ENCODE measurements at regions of chr20 and their contacts with region 1.

Region 1: GRCh38 chr20:956330-956951 is 40.3 kb upstream of the ANGPT4 start:
- DNase-seq: peak; percentile 67 to 87 (median 81)
- H3K4me3 ChIP-seq: no peak overlapping the region
- H3K27ac ChIP-seq: no peak overlapping the region
- H3K4me1 ChIP-seq: peaks cover 0 to 7% (median 1%) of the 10 kb centered on the region in 4 experiments
- H3K27me3 ChIP-seq: peaks cover 0 to 14% (median 4%) of the 10 kb centered on the region in 5 experiments

Region 2: DNA sequence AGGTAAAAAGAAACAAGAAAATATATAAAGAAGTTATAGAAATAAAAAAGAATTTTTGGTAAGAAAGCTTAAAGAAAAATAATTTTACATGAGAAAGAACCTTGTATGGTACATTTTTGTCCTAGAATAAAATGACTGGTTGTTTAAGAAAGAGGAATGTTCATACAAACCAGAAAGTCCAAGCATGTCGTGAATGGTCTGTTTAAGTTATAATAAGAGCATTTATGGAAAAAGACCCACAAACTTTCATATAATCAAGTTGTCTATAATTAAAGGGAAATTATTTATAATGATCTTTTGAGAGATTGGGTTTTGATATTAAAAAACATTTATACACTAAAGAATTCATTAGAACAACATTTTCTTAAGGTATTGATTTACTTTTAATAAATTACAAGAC is 150.7 kb before region 1 on chr20:
- CTCF ChIA-PET with region 1: interaction called, 12 read pairs
- POLR2A ChIA-PET with region 1: no interaction called
- DNase-seq: peak in 2 of 3 donors; percentile 7 to 26
- H3K4me3 ChIP-seq: no peak overlapping the region
- H3K27ac ChIP-seq: no peak overlapping the region
- H3K4me1 ChIP-seq: no peaks in the 10 kb centered on the region
- H3K27me3 ChIP-seq: peaks cover 0 to 2% (median 0%) of the 10 kb centered on the region in 5 experiments

Region 3: GRCh38 chr20:884983-885952 is 71.2 kb before region 1 on chr20:
- CTCF ChIA-PET with region 1: interaction called, 24 read pairs
- POLR2A ChIA-PET with region 1: no interaction called
- DNase-seq: peak; percentile 72 to 87 (median 82)
- H3K4me3 ChIP-seq: peak overlapping the region in 1 of 7 experiments; percentile 33
- H3K27ac ChIP-seq: no peak overlapping the region
- H3K4me1 ChIP-seq: peaks cover 0 to 7% (median under 1%) of the 10 kb centered on the region in 4 experiments
- H3K27me3 ChIP-seq: peaks cover 0 to 8% (median 0%) of the 10 kb centered on the region in 5 experiments

Region 4: GRCh38 chr20:967796-968742 is 11.6 kb after region 1 on chr20:
- CTCF ChIA-PET with region 1: interaction called, 36 read pairs
- POLR2A ChIA-PET with region 1: no interaction called
- DNase-seq: peak; percentile 22 to 49 (median 45)
- H3K4me3 ChIP-seq: no peak overlapping the region
- H3K27ac ChIP-seq: no peak overlapping the region
- H3K4me1 ChIP-seq: no peaks in the 10 kb centered on the region
- H3K27me3 ChIP-seq: peaks cover 0 to 2% (median 0%) of the 10 kb centered on the region in 5 experiments

Region 5: DNA sequence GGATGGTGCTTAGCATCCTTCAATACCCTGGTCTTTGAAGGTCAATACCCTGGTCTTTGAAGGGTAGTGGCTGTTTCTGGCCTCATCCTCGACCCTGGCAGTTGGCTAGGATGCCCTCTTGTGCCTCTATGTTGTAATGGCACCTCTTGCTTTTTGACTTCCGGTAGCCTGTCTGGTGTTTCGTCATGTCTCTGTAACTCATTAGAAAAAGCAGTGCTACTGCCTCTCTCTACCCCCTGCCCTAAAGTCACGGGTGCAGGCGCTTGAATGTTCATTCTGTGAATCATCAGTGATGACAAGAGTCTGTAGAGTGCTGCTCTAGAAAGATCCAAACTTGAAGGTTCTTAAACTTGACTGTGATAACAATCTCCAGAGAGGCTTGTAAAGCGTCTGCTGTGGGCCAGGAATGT is 17.3 kb after region 1 on chr20:
- CTCF ChIA-PET with region 1: interaction called, 36 read pairs
- POLR2A ChIA-PET with region 1: no interaction called
- DNase-seq: peak; percentile 58 to 78 (median 75)
- H3K4me3 ChIP-seq: no peak overlapping the region
- H3K27ac ChIP-seq: no peak overlapping the region
- H3K4me1 ChIP-seq: no peaks in the 10 kb centered on the region
- H3K27me3 ChIP-seq: peaks cover 0 to 2% (median 0%) of the 10 kb centered on the region in 5 experiments

Region 6: GRCh38 chr20:1108437-1108920 is 152.0 kb after region 1 on chr20:
- CTCF ChIA-PET with region 1: interaction called, 12 read pairs
- POLR2A ChIA-PET with region 1: no interaction called
- DNase-seq: peak in 2 of 3 donors; percentile 43 to 55
- H3K4me3 ChIP-seq: no peak overlapping the region
- H3K27ac ChIP-seq: no peak overlapping the region
- H3K4me1 ChIP-seq: no peaks in the 10 kb centered on the region
- H3K27me3 ChIP-seq: no peaks in the 10 kb centered on the region

Region 7: DNA sequence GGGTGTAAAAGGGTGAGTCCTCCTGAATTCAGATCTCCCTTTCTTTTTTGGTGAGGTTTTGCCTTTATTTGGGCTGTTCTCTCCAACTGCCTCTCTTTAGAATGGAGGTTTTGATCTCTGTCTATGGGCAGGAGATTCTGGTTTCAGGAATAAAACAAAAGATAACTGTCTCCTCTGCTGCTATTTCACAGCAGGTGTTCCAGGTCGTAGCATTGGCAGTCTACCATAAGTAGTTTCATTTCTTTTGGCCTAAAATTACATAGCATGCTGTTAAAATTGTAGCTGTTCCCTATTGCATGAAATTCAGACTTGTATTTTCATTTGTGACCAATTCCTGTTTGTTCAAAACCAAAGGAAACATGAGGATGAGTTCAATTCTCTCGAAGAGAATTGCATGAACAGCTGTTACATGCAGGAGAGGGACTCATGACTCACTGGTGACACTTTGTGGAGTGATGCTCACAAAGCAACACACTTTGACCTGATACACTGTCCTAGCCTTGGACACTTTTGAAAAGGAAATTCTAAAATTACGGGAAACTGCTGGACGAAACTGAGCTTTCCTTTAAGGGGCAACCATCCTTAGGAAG is 777.9 kb after region 1 on chr20:
- CTCF ChIA-PET with region 1: no interaction called
- POLR2A ChIA-PET with region 1: no interaction called
- DNase-seq: peak in 2 of 3 donors; percentile 24 to 30
- H3K4me3 ChIP-seq: no peak overlapping the region
- H3K27ac ChIP-seq: no peak overlapping the region
- H3K4me1 ChIP-seq: peaks cover 0 to 2% (median 0%) of the 10 kb centered on the region in 4 experiments
- H3K27me3 ChIP-seq: peaks cover 0 to 6% (median 0%) of the 10 kb centered on the region in 5 experiments

Measured in common myeloid progenitor, CD34-positive (primary cell).